Mammary epithelial cell (primary cell): ENCODE measurements at regions of chr1 and their contacts with region 1.

Region 1: DNA sequence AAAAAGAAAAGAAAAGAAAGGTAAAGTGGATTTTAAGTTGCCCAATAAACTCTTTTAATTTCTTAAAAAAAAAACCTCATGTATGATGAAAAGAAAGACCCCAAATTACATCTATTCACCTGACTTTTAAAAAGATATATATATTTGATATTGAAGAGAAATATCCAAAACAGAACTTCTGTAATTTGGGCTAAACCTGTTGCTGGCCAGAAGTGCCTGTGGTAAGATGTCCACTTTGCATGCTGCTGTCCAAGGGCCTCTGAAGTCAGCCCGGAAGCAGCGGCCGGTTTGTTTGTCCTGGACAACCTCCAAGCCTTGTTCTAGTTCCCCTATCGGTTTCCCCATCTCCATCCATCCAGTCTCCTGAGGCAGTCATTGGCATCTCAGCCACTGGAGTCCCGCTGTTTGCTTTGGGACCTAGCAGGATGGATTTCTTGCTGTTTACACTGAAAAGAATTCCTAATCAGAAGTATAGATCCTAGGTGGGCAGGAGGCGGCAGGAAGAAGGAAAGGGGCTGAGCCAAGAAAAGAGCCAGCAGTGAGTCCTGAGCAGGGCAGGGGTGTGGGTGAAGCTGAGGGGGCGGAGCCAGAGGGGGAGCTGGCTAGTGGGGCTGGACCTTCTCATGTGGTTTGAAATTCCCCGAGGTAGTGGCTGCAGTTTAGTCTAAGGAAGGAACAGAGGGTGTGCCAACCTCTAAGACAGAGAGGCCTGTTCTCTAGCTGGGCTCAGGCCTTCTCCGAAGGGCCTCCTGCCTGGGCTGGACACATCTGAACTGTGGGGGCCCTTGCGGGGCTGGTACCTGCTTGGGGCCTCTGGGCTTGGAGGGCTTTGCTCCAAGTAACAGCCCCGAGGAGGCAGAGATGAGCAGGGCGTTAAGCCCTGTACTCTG is 3.3 kb downstream of the NCMAP start:
- DNase-seq: peak; percentile 68
- H3K4me3 ChIP-seq: no peak overlapping the region
- H3K27ac ChIP-seq: no peak overlapping the region
- H3K4me1 ChIP-seq: peaks cover 16% of the 10 kb centered on the region
- H3K27me3 ChIP-seq: no peaks in the 10 kb centered on the region
- CTCF ChIP-seq: no peak

Region 2: DNA sequence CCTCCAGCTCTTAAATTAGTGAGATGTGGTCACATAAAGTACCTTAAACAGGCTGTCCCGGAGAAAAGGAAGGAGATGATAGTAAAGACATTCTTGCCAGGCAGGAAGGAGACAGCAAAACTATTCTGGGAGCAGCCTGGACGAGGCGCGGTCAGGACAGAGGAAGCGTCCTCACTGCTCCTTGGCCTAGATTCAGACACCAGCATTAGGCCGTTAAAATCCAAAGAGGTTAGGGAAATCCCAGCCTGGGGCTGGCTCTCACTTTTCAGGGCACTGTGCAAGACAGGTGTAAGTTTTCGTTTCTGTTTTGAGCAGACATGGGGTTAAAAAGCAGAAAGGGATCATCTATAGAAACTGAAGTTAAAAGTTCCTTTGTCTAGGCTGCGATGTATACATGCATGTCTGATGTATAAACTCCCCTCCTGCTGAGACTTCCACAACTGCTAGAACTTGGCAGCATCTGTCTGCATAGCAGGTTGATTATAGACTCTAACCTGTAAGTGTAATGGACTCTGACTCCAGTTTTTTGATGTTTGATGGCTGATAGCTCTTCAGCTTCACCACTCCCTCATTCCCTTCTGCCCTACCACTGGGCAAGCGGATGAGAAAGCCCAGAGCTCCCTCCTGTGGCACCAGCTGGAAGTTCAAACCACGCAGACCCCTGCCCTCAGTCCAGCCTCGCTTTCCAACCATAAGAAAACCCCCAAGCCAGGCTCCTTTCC is 167.1 kb before region 1 on chr1:
- CTCF ChIA-PET with region 1: interaction called, 13 read pairs
- dilution Hi-C with region 1: no loop called
- in situ Hi-C with region 1: no loop called
- intact Hi-C with region 1: no loop called
- DNase-seq: peak; percentile 50
- H3K4me3 ChIP-seq: peak overlapping the region in 2 of 3 experiments; percentile 14 to 24
- H3K27ac ChIP-seq: peak overlapping the region; percentile 76
- H3K4me1 ChIP-seq: peaks cover 28% of the 10 kb centered on the region
- H3K27me3 ChIP-seq: no peaks in the 10 kb centered on the region
- CTCF ChIP-seq: peak; percentile 87 to 90

Region 3: GRCh38 chr1:24502709-24503058 is 56.5 kb before region 1 on chr1 and contains the start of gene RCAN3:
- CTCF ChIA-PET with region 1: no interaction called
- dilution Hi-C with region 1: loop called (anchors 5 kb)
- in situ Hi-C with region 1: no loop called
- intact Hi-C with region 1: no loop called
- DNase-seq: peak; percentile 88
- H3K4me3 ChIP-seq: peak within 1 kb of the TSS; percentile 81 to 97 (median 94)
- H3K27ac ChIP-seq: peak within 1 kb of the TSS; percentile 84
- H3K4me1 ChIP-seq: peaks cover 11% of the 10 kb centered on the region
- H3K27me3 ChIP-seq: no peaks in the 10 kb centered on the region
- CTCF ChIP-seq: no peak
- total RNA-seq, gene RCAN3: 21.0 to 34.8 TPM

Region 4: DNA sequence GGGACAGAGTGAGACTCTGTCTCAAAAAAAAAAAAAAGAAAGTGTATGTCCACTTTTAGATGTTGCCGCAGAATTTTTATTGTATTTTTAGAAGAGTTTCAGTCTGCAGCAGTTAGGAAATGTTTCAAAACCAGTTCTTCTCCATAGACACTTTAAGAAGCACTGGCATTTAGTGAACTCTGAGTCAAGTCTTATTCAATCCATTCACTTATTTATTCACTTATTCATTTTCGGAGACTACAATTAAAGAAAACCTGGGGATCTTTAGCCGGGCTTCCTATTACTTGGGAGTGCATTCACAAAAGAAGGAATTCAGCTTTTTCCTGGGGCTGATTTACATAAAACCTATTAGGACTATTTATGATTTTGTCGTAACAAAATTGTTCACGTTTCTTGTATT is 44.2 kb before region 1 on chr1:
- CTCF ChIA-PET with region 1: no interaction called
- dilution Hi-C with region 1: no loop called
- in situ Hi-C with region 1: no loop called
- intact Hi-C with region 1: no loop called
- DNase-seq: no peak
- H3K4me3 ChIP-seq: no peak overlapping the region
- H3K27ac ChIP-seq: no peak overlapping the region
- H3K4me1 ChIP-seq: peaks cover 12% of the 10 kb centered on the region
- H3K27me3 ChIP-seq: no peaks in the 10 kb centered on the region
- CTCF ChIP-seq: no peak

Region 5: DNA sequence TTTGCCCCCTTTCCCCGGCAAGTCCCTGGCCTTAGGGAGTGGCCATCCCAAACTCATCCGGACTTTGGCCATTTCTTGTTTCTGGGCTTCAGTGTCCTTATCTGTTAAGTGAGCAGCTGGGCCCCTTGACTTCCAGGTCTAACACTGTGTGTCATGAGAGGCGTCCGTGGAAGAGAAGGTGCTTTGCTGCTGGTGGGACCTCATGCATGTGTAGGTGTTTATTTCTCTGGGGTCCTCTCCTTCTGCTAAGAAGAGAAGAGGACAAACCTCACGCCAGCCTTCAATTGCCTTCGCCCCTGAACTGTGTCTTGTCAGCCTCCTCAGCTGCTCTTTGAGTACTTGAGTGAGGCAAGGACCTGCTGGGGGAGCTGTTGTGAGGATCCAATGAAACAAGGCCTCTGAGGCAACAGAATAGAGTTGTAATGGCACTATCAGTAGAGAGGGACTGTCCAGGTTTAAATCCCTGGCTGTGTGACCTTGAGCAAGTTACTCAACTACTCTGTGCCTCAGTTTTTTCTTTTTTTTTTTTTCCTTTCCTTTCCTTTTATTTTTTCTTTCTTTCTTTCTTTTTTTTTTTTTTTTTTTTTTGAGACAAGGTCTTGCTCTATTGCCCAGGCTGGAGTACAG is 298.5 kb after region 1 on chr1:
- CTCF ChIA-PET with region 1: no interaction called
- dilution Hi-C with region 1: no loop called
- in situ Hi-C with region 1: no loop called
- intact Hi-C with region 1: no loop called
- DNase-seq: no peak
- H3K4me3 ChIP-seq: no peak overlapping the region
- H3K27ac ChIP-seq: no peak overlapping the region
- H3K4me1 ChIP-seq: no peaks in the 10 kb centered on the region
- H3K27me3 ChIP-seq: no peaks in the 10 kb centered on the region
- CTCF ChIP-seq: no peak